HEK293T (cell line): ENCODE measurements at regions of chr20 and their contacts with region 1.

Region 1: GRCh38 chr20:50680412-50680908 is 10.9 kb downstream of the RIPOR3 start:
- DNase-seq: no peak

Region 2: DNA sequence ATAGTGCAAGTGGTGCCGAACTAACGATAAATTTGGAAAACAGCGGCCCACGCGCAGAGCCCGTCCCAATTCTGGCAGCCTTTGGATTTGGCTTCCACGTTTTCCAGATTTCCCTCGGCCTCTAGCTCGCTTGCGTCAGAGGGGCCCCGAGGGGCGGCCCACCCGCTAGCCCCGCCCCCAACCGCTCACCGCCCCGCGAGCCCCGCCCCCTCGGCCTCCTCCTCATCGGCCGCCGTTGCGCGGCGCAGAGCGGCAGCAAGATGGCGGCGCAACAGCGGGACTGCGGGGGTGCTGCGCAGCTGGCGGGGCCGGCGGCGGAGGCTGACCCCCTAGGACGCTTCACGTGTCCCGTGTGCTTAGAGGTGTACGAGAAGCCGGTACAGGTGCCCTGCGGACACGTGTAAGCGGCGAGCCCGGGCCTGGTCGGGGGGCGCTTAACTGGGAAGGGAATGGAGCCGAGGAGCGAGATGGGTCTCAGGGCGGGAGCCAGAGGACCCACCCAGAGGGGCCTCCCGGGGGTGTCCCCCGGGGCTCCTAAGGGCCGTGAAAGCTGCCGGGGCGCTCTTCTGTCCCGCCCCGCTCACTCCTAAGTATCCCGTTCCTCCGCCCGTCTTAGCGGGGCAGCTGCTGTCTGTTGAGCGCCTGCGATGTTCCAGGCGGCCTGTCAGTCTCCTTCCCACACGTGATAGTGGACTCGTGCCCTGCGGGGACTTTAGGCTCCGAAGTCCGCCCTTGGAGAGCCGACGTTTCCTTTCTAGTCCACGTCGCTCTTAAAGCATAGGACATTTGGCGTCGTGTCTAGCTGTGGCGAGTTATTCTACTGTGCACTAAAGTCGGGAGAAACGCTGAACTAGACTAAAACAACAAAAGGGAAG is 744.1 kb before region 1 on chr20 and contains the start of gene RNF114:
- CTCF ChIA-PET with region 1: interaction called, 10 read pairs
- POLR2A ChIA-PET with region 1: no interaction called
- DNase-seq: peak; percentile 98

Region 3: GRCh38 chr20:50724851-50725721 is 44.6 kb after region 1 on chr20:
- CTCF ChIA-PET with region 1: no interaction called
- POLR2A ChIA-PET with region 1: no interaction called
- DNase-seq: peak; percentile 27